Heart left ventricle (tissue), 16 donors: ENCODE measurements at regions of chr12 and their contacts with region 1.

Region 1: DNA sequence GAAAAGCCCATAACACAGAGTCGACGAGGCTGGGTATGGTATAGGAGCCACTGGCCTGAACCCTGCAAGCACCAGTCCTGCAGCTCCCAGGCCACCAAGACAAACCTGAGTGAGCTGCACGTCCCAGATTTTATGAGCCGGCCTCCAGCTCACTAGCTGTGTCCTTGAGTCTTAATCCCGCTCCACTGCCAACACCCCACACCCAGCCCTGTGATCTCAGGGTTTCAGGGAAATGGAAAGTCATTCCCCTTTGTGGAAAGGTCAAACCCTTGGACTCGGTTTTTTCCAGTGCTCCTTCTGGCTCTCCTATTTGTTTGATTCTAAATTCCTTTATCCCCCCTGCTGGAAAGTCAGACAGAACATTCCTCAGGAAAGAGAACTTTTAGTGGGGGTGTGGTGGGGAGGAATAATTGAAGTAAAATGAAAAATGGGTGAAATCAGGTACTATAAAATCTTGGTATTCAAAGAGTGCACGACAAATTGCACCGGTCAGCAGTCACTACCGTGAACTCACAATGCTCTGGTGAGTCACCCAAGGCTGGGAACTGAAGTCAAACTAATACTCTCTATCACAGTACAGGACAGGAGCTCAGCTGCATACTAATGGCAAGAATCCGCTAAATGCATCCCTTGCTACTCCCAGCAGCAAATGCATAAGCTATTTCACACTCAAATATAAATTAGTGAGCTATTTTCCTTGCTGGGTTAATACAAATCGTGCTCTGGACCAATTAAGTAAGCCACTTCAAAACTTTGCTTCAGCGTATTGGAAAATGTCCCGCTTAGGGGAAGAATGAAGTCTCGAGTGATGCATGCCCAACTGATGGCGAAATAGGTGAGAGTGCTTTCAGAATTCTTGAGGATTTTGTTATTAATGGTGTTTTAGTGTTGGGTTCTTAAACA is 9.0 kb downstream of the PITPNM2 start:
- DNase-seq: peak in 3 of 5 donors; percentile 58 to 87 (median 68)
- ATAC-seq: peak; percentile 70 to 88 (median 85)
- H3K4me3 ChIP-seq: no peak overlapping the region
- H3K27ac ChIP-seq: peak overlapping the region; percentile 15 to 87 (median 79)
- H3K4me1 ChIP-seq: peaks cover 8 to 50% (median 42%) of the 10 kb centered on the region in 12 donors
- H3K27me3 ChIP-seq: no peaks in the 10 kb centered on the region
- CTCF ChIP-seq: no peak
- POLR2A ChIP-seq: no peak

Region 2: DNA sequence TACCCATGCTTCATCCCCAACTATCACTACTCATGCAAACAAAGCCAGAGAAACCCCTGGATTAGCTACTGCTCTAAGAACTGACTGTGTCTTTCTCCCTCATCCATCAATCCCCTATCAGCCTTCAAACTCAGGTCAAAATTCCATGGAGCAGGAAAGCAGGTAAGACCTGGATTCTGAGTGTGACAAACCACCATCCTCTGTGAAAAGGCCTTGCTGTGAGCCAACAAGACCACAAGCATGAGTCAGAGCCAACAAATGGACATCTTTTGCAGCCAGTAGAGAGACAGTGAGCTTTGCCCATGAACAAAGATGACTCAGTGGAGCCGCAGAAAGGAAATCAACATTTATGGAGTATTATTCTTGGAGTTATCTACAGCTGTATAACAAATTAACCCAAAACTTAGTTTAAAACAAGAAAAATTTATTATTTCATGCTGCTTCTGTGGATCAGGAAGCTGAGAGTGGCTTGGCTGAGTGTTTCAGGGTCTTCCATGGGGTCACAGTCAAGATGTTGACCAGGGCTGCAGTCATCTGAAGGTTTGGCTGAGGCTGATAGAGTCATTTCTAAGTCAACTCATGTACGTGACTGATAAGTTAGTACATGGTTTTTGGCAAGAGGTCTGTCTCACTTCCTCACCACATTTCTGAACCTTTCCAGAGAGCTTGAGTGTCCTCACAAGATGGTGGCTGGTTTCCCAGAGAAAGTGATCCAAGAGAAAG is 52.1 kb before region 1 on chr12:
- intact Hi-C with region 1: loop called in 1 of 10 experiments (anchors 10 kb)
- DNase-seq: no peak
- ATAC-seq: no peak
- H3K4me3 ChIP-seq: no peak overlapping the region
- H3K27ac ChIP-seq: peak overlapping the region in 5 of 12 donors; percentile 21 to 53 (median 36)
- H3K4me1 ChIP-seq: peaks cover 7 to 75% (median 58%) of the 10 kb centered on the region in 12 donors
- H3K27me3 ChIP-seq: no peaks in the 10 kb centered on the region
- CTCF ChIP-seq: no peak
- POLR2A ChIP-seq: no peak

Region 3: GRCh38 chr12:123106628-123107359 is 35.1 kb before region 1 on chr12:
- intact Hi-C with region 1: loop called in 8 of 10 experiments (anchors 5 kb)
- DNase-seq: peak; percentile 55 to 80 (median 67)
- ATAC-seq: peak in 3 of 4 donors; percentile 50 to 79 (median 69)
- H3K4me3 ChIP-seq: no peak overlapping the region
- H3K27ac ChIP-seq: peak overlapping the region; percentile 58 to 91 (median 82)
- H3K4me1 ChIP-seq: peaks cover 15 to 83% (median 65%) of the 10 kb centered on the region in 12 donors
- H3K27me3 ChIP-seq: no peaks in the 10 kb centered on the region
- CTCF ChIP-seq: no peak
- POLR2A ChIP-seq: no peak